ENCODE measurements at regions of chr10 and their contacts with region 1.

Region 1: GRCh38 chr10:63217120-63217605 is 84.0 kb downstream of the NRBF2 start:
- DNase-seq: no peak
- ATAC-seq: peak; percentile 90
- H3K4me3 Mint-ChIP-seq: no peak overlapping the region
- H3K27ac Mint-ChIP-seq: peak overlapping the region; percentile 19
- H3K4me1 Mint-ChIP-seq: peaks cover 55% of the 10 kb centered on the region
- H3K27me3 Mint-ChIP-seq: no peaks in the 10 kb centered on the region

Region 2: DNA sequence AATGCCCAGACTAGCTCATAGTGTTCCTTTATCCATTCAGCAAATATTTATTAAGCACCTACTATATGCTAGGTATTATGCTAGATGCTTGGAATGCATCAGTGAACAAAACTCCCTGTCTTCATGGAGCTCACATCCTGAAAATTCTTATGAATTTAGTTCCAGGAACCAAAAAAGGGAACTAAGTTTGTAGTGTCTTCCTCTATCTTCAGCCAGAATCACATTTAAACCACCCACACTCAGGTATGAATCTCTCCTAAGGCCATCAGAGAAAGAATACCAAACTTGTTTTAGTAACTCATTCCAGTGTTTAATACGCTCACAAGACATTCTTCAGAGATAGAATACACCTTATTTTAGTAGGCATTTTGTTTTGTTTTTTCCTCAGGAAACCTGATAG is 390.9 kb before region 1 on chr10:
- CTCF ChIA-PET with region 1: no interaction called
- POLR2A ChIA-PET with region 1: no interaction called
- intact Hi-C with region 1: no loop called
- DNase-seq: no peak
- ATAC-seq: no peak
- H3K4me3 Mint-ChIP-seq: no peak overlapping the region
- H3K27ac Mint-ChIP-seq: no peak overlapping the region
- H3K4me1 Mint-ChIP-seq: no peaks in the 10 kb centered on the region
- H3K27me3 Mint-ChIP-seq: peaks cover 5% of the 10 kb centered on the region

Region 3: GRCh38 chr10:63227207-63227915 is 10.2 kb after region 1 on chr10:
- CTCF ChIA-PET with region 1: interaction called, 15 read pairs
- POLR2A ChIA-PET with region 1: interaction called, 12 read pairs
- intact Hi-C with region 1: no loop called
- DNase-seq: no peak
- ATAC-seq: peak; percentile 45
- H3K4me3 Mint-ChIP-seq: peak overlapping the region; percentile 52
- H3K27ac Mint-ChIP-seq: peak overlapping the region; percentile 88
- H3K4me1 Mint-ChIP-seq: peaks cover 53% of the 10 kb centered on the region
- H3K27me3 Mint-ChIP-seq: no peaks in the 10 kb centered on the region

Region 4: GRCh38 chr10:63236113-63236935 is 19.2 kb after region 1 on chr10:
- CTCF ChIA-PET with region 1: interaction called, 8 read pairs
- POLR2A ChIA-PET with region 1: interaction called, 12 read pairs
- intact Hi-C with region 1: no loop called
- DNase-seq: peak; percentile 36
- ATAC-seq: peak; percentile 85
- H3K4me3 Mint-ChIP-seq: no peak overlapping the region
- H3K27ac Mint-ChIP-seq: peak overlapping the region; percentile 47
- H3K4me1 Mint-ChIP-seq: peaks cover 67% of the 10 kb centered on the region
- H3K27me3 Mint-ChIP-seq: no peaks in the 10 kb centered on the region

Region 5: DNA sequence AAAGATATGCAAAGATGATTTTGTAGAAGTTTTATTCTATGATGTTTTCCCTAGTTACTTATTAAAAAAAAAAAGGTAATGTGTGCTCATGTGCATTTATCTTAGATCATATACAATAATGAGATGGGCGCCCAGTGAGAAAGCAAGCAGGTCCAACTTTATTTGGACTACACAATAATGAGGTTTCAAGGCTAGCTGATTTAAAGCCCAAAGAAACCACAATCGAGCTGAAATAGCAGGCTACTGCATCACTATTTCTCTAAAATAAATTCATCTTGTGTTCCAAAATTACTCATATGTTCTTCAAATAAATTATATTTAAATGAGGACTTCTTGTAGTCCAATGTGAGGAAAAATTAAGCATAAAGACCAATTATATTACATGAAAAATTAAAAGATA is 138.5 kb after region 1 on chr10:
- CTCF ChIA-PET with region 1: no interaction called
- POLR2A ChIA-PET with region 1: no interaction called
- intact Hi-C with region 1: loop called in 1 of 2 experiments (anchors 10 kb)
- DNase-seq: no peak
- ATAC-seq: no peak
- H3K4me3 Mint-ChIP-seq: no peak overlapping the region
- H3K27ac Mint-ChIP-seq: peak overlapping the region; percentile 40
- H3K4me1 Mint-ChIP-seq: peaks cover 34% of the 10 kb centered on the region
- H3K27me3 Mint-ChIP-seq: no peaks in the 10 kb centered on the region

Region 6: GRCh38 chr10:63465293-63466143 is 248.4 kb after region 1 on chr10 and contains the start of gene JMJD1C:
- CTCF ChIA-PET with region 1: interaction called, 3 read pairs
- POLR2A ChIA-PET with region 1: no interaction called
- intact Hi-C with region 1: loop called in 1 of 2 experiments (anchors 2 kb)
- DNase-seq: peak; percentile 76
- ATAC-seq: peak; percentile 73
- H3K4me3 Mint-ChIP-seq: peak within 1 kb of the TSS; percentile 94
- H3K27ac Mint-ChIP-seq: peak within 1 kb of the TSS; percentile 72
- H3K4me1 Mint-ChIP-seq: peaks cover 23% of the 10 kb centered on the region
- H3K27me3 Mint-ChIP-seq: no peaks in the 10 kb centered on the region
- total RNA-seq, gene JMJD1C: 41.5 to 42.5 TPM

Region 7: GRCh38 chr10:63521416-63522276 is 304.5 kb after region 1 on chr10:
- CTCF ChIA-PET with region 1: no interaction called
- POLR2A ChIA-PET with region 1: no interaction called
- intact Hi-C with region 1: loop called in 1 of 2 experiments (anchors 5 kb)
- DNase-seq: peak; percentile 75
- ATAC-seq: peak; percentile 72
- H3K4me3 Mint-ChIP-seq: peak overlapping the region; percentile 86
- H3K27ac Mint-ChIP-seq: peak overlapping the region; percentile 94
- H3K4me1 Mint-ChIP-seq: peaks cover 57% of the 10 kb centered on the region
- H3K27me3 Mint-ChIP-seq: no peaks in the 10 kb centered on the region

Measured in activated CD4-positive, alpha-beta T cell treated with anti-CD3 and anti-CD28 coated beads for 36 hours (primary cell).